Activated CD4-positive, alpha-beta memory T cell treated with anti-CD3 and anti-CD28 coated beads for 36 hours (primary cell): ENCODE measurements at regions of chr17 and their contacts with region 1.

Region 1: DNA sequence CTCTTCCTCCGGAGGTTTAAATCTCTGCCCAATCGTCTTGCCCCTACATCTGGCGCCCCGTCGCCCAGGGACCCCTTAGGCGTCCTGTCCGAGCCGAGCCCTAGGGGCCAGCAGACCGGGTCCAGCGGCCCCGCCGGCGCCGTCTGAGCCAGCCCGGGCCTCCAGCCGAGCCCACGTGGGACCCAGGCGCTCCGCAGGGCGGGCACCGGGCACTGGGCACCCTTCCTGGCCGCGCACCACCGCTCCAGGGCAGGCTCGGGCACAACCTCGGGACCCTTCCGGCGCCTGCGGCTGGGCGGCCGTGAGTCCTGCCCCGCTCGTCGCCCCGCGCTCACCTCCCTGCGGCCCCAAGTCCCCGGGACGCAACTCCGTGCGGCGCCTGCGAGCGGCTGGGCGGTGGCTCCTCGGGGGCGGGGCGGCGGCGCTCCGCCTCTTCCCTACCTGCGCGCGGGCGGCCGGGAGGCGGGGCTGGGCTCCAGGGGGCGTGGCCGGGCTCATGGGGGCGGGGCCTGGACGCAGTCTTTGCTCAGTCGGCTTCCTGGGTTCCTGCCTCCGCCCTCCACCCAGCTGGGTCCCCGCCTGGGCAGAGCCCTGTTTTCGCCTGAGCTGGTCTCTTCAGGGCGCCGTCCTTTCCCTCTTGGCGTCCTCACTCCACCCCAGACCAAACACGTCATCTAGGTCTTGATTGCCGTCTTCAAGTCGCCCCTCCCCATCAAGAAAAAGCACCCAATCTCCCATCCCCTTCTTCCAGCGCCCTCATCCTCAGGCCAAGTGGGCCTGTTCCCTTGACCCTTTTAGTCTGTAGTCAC is at the start of gene RHBDF2:
- DNase-seq: peak; percentile 98
- H3K4me3 Mint-ChIP-seq: peak within 1 kb of the TSS; percentile 86
- H3K27ac Mint-ChIP-seq: peak within 1 kb of the TSS; percentile 85
- H3K4me1 Mint-ChIP-seq: peaks cover 45% of the 10 kb centered on the region
- H3K27me3 Mint-ChIP-seq: no peaks in the 10 kb centered on the region
- total RNA-seq, gene RHBDF2: 28.9 to 30.0 TPM

Region 2: DNA sequence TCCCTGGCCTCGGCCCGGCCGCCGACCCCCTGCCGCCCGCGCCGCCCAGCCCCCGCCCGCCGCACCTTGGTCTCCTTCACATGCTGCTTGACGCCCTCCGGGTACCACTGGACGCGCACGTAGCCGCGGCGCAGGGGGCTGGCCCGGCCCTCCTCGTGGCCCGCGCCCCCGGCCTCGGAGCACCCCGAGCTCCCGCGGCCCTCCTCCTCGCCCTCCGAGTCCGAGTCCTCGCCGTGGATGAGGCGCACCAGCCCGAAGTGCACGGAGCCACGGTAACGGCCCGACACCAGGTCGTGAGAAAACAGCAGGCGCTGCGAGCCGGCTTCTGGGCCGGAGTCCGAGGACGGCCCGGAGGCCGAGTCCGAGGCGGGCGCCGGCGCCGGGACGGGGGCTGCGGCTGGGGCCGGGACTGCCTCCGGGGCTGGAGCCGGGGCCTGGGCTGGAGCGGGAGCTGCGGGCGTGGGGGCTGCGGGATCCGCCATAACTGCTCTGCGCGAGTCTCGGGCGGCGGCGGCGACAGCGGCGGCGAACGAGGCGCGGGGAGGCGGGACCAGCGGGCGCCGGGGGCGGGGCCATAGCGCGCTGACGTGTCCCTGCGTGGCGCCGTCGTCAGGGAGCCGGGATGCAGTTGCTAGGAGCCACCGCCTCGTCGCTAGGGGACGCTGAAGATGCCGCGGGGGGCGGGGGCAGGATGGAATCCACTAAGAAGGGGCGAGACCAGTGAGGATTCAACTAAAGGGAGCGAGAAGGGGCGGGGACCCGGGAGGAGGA is 48.4 kb before region 1 on chr17 and contains the start of gene UBE2O:
- CTCF ChIA-PET with region 1: interaction called, 5 read pairs
- POLR2A ChIA-PET with region 1: interaction called, 3 read pairs
- intact Hi-C with region 1: loop called (anchors 5 kb)
- DNase-seq: peak; percentile 94
- H3K4me3 Mint-ChIP-seq: peak within 1 kb of the TSS; percentile 83
- H3K27ac Mint-ChIP-seq: no peak within 1 kb of the TSS
- H3K4me1 Mint-ChIP-seq: peaks cover 33% of the 10 kb centered on the region
- H3K27me3 Mint-ChIP-seq: no peaks in the 10 kb centered on the region
- total RNA-seq, gene UBE2O: 24.5 to 25.2 TPM